GM12878 (cell line): ENCODE measurements at regions of chr1 and their contacts with region 1.

Region 1: DNA sequence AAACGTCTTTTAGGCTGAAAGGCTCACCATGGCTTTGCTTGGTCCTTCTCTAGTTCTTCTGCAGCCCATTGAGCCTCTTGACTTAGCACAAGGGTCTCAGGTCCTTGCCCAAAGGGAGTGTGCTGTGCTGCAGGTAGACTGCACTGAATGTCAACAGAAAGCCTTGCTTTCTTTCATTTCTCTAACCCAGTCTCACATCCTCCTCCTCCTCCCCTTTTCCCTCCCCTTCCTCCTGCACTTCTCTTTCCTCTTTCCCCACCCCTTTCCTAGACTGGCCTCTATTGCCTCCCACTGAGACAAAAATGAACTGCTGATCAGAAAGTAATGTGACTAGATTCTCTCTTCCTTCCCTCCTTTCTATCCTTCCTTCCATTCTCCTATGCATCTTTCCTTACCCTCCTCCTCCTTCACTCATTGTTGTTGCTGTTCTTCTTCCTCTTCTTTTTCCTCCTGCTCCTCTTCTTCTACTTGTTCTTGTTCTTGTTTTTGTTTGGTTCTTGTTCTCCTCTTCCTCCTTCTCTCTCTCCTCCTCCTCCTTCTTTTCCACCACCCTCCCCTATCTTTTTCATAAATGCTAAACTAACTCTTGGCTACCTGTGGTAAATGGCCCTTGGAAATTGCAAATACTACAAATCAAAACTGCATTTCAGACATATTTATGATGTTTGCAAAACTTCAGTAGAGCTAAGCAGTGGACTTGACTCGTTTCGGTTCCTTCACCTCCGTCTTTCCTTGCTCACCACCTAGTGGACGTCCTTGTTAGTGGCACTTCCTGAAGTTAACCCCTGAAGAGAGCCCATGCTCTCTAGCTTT is at the start of gene SELL:
- DNase-seq: peak; percentile 90
- ATAC-seq: peak; percentile 79
- H3K4me3 ChIP-seq: peak within 1 kb of the TSS; percentile 45
- H3K27ac ChIP-seq: peak within 1 kb of the TSS; percentile 49
- H3K4me1 ChIP-seq: peaks cover 4% of the 10 kb centered on the region; the same call in 1 of the 2 replicates
- H3K27me3 ChIP-seq: no peaks in the 10 kb centered on the region
- CTCF ChIP-seq: peak; percentile 91 to 98 (median 95)
- EP300 ChIP-seq: no peak
- POLR2A ChIP-seq: peak; percentile 44; the same call in 1 of the 2 replicates
- RAD21 ChIP-seq: peak; percentile 99
- polyA plus RNA-seq, gene SELL: 53.5 to 63.2 TPM

Region 2: GRCh38 chr1:168603501-168604110 is 1108.1 kb before region 1 on chr1:
- CTCF ChIA-PET with region 1: interaction called, 7 read pairs
- POLR2A ChIA-PET with region 1: no interaction called
- RAD21 ChIA-PET with region 1: interaction called, 3 read pairs
- SMC1A ChIA-PET with region 1: interaction called, 4 read pairs
- in situ Hi-C with region 1: no loop called
- intact Hi-C with region 1: loop called (anchors 10 kb)
- DNase-seq: peak; percentile 7
- ATAC-seq: peak; percentile 99
- H3K4me3 ChIP-seq: no peak overlapping the region
- H3K27ac ChIP-seq: no peak overlapping the region
- H3K4me1 ChIP-seq: no peaks in the 10 kb centered on the region
- H3K27me3 ChIP-seq: no peaks in the 10 kb centered on the region; a peak in 1 of 4 replicates
- CTCF ChIP-seq: peak; percentile 76 to 92 (median 80)
- EP300 ChIP-seq: no peak
- POLR2A ChIP-seq: no peak
- RAD21 ChIP-seq: peak; percentile 97

Region 3: GRCh38 chr1:169546087-169546995 is 165.3 kb before region 1 on chr1:
- CTCF ChIA-PET with region 1: interaction called, 51 read pairs
- POLR2A ChIA-PET with region 1: no interaction called
- RAD21 ChIA-PET with region 1: interaction called, 28 read pairs
- SMC1A ChIA-PET with region 1: interaction called, 25 read pairs
- in situ Hi-C with region 1: no loop called
- intact Hi-C with region 1: loop called (anchors 1 kb)
- DNase-seq: peak; percentile 40
- ATAC-seq: peak; percentile 92
- H3K4me3 ChIP-seq: no peak overlapping the region
- H3K27ac ChIP-seq: no peak overlapping the region
- H3K4me1 ChIP-seq: no peaks in the 10 kb centered on the region
- H3K27me3 ChIP-seq: no peaks in the 10 kb centered on the region
- CTCF ChIP-seq: peak; percentile 63 to 69 (median 66)
- EP300 ChIP-seq: no peak
- POLR2A ChIP-seq: no peak
- RAD21 ChIP-seq: peak; percentile 75

Region 4: DNA sequence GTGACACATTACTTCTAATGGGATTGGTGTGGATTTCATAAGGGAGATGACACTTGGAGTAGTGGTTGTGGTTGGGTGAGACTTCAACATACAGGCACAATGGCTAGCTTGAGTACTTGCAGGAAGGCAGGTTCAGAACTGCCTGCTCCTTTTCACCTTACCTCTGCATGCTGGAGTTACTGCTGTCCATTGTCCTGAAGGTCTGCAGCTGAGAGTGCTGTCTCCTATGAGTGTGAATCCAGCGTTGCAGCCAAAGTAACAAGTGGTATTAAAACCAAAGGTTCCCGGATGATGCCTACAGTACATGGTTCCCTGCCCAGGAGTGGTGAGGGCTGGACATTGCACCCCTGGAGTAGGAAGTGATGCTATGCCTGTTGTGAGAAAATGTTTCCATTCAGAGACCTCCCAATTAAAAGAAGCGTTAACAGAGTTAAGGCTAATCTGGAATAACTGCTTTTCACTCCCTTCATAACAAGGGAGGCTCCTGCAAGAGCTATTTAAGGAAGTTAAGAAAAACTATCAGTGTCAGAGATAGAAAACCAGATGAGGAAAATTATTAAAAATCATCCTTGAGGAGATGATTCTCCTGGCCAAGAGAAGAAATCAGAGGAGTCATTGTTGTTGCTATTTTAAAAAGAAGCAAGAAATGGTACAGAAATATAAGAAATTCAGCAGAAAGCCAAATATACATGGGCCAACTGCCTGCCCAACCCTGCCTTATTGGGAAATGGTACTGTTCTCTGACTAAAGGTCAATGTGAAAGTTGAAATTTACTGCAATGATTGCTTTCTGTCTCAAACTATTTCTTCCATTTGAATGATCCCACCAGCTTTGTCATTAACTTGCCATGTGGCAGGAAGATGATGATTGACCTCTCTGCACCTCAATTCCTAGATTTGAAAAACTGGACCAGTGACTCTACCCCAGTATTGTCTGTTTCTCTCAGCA is 115.6 kb before region 1 on chr1:
- CTCF ChIA-PET with region 1: interaction called, 193 read pairs
- POLR2A ChIA-PET with region 1: no interaction called
- RAD21 ChIA-PET with region 1: interaction called, 98 read pairs
- SMC1A ChIA-PET with region 1: interaction called, 154 read pairs
- in situ Hi-C with region 1: loop called (anchors 5 kb)
- intact Hi-C with region 1: loop called (anchors 1 kb)
- DNase-seq: no peak
- ATAC-seq: peak; percentile 79
- H3K4me3 ChIP-seq: no peak overlapping the region
- H3K27ac ChIP-seq: no peak overlapping the region
- H3K4me1 ChIP-seq: peaks cover 12% of the 10 kb centered on the region
- H3K27me3 ChIP-seq: no peaks in the 10 kb centered on the region
- CTCF ChIP-seq: no peak
- EP300 ChIP-seq: no peak
- POLR2A ChIP-seq: no peak
- RAD21 ChIP-seq: no peak

Region 5: GRCh38 chr1:169615803-169616202 is 95.9 kb before region 1 on chr1:
- CTCF ChIA-PET with region 1: interaction called, 22 read pairs
- POLR2A ChIA-PET with region 1: no interaction called
- RAD21 ChIA-PET with region 1: interaction called, 5 read pairs
- SMC1A ChIA-PET with region 1: interaction called, 20 read pairs
- in situ Hi-C with region 1: no loop called
- intact Hi-C with region 1: no loop called
- DNase-seq: no peak
- ATAC-seq: no peak
- H3K4me3 ChIP-seq: no peak overlapping the region
- H3K27ac ChIP-seq: no peak overlapping the region
- H3K4me1 ChIP-seq: no peaks in the 10 kb centered on the region
- H3K27me3 ChIP-seq: no peaks in the 10 kb centered on the region
- CTCF ChIP-seq: no peak
- EP300 ChIP-seq: no peak
- POLR2A ChIP-seq: no peak
- RAD21 ChIP-seq: no peak

Region 6: DNA sequence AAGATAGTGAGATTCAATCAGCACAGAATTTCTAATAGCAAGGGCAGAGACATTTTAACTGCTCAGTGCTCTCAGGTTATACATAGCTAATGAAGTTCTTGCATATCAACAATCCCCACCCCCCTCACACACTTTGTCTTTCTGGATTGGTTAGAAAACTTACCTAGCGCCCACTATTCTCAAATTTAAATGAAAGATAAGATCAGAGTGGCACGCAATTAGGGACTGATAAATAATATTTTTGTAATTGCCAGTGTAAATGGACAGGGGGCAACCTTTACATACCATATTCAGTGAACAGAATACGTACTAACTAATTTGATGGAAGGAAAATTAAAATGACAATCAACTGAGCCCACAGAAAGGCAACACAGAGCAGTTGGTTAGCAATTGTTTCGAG is 12.0 kb before region 1 on chr1:
- CTCF ChIA-PET with region 1: interaction called, 48 read pairs
- POLR2A ChIA-PET with region 1: interaction called, 7 read pairs
- RAD21 ChIA-PET with region 1: interaction called, 40 read pairs
- SMC1A ChIA-PET with region 1: interaction called, 114 read pairs
- in situ Hi-C with region 1: no loop called
- intact Hi-C with region 1: loop called (anchors 2 kb)
- DNase-seq: no peak
- ATAC-seq: no peak
- H3K4me3 ChIP-seq: no peak overlapping the region
- H3K27ac ChIP-seq: peak overlapping the region; percentile 38; the same call in 1 of the 2 replicates
- H3K4me1 ChIP-seq: peaks cover 40% of the 10 kb centered on the region
- H3K27me3 ChIP-seq: no peaks in the 10 kb centered on the region
- CTCF ChIP-seq: no peak
- EP300 ChIP-seq: no peak
- POLR2A ChIP-seq: no peak
- RAD21 ChIP-seq: no peak

Region 7: GRCh38 chr1:169802888-169803287 is 91.2 kb after region 1 on chr1:
- CTCF ChIA-PET with region 1: interaction called, 5 read pairs
- POLR2A ChIA-PET with region 1: no interaction called
- RAD21 ChIA-PET with region 1: no interaction called
- SMC1A ChIA-PET with region 1: interaction called, 3 read pairs
- in situ Hi-C with region 1: no loop called
- intact Hi-C with region 1: loop called (anchors 2 kb)
- DNase-seq: no peak
- ATAC-seq: peak; percentile 31
- H3K4me3 ChIP-seq: no peak overlapping the region
- H3K27ac ChIP-seq: no peak overlapping the region
- H3K4me1 ChIP-seq: no peaks in the 10 kb centered on the region
- H3K27me3 ChIP-seq: no peaks in the 10 kb centered on the region
- CTCF ChIP-seq: no peak
- EP300 ChIP-seq: no peak
- POLR2A ChIP-seq: no peak
- RAD21 ChIP-seq: no peak